ENCODE measurements at regions of chr18 and their contacts with region 1.

Region 1: DNA sequence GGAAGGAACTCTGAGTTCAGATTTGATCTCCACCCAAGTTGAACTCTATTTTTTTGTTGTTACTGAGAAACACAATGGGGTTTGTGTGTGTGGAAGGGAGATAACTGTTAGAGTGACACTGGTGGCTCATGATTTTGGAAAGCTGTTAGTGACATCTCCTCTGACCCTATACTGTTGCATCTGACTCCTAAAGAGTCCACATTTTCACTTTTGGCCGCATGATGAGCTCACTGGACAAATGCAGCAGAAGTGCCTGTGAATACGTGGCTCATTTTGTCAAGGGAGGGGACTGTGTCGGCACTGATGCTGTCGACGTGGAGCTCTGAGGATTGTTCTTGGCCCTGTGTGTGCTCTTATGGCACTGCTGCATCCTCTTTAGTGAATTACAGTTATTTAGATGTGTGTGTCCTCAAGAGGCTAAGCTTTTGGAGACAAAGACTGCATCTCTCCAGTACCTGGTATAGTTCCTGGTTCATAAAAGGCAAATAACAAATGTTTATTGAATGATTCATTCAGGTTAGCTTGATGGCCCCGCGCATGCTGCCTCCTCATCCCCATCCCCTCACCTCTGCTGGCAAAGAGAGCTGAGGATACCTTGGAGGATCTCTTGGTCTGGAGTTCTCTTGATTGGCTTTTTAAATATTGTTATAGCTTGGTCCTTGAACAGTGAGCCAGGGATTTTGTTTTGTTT is 135.4 kb downstream of the PHLPP1 start:
- DNase-seq: no peak
- H3K4me3 ChIP-seq: peak overlapping the region in 17 of 59 donors; percentile 1 to 40 (median 15)
- H3K27ac ChIP-seq: peak overlapping the region in 58 of 59 donors; percentile 5 to 93 (median 79)
- H3K27me3 ChIP-seq: no peaks in the 10 kb centered on the region
- CTCF ChIP-seq: no peak

Region 2: DNA sequence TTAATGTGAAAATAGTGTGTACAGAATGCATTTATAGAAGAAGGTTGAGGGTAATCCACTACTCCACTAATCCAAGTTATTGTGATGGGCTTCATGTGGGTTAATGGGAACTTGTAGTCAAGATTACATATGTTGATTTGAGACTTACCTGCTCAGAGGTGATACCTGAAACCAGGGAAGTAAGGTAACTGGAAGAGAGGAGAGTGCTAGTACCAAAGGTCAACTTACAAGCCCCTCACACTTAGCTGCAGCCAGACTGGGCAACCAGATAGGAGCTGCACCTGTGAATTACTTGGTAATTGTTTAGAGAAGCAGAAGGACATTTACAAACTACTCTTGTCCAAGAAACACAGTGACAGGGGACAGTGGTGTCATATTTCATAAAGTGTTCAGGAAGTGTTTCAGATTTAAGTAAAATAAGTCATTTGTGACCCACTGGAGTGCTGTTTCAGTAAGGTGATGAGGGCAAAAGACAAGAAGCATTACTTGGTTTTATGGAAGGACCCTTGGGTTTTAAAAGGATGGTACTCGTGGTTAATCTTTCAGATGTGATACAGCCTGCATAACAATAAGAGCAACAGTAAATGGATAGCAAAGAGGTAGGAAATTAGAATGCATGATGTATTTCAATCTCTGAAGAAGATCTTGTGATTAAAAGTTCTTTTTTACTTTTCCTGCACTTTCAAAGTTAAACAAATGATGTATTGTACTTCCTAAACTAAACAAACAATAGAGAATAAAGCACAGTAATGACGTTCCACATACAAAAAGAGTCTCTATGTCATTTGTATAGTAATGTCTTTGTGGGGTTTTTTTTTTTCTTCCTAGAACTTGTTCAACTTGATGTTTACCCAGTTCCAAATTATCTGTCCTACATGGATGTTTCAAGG is 53.9 kb after region 1 on chr18:
- intact Hi-C with region 1: loop called in 1 of 2 experiments (anchors 10 kb)
- DNase-seq: no peak
- H3K4me3 ChIP-seq: peak overlapping the region in 6 of 59 donors; percentile 1 to 36 (median 10)
- H3K27ac ChIP-seq: peak overlapping the region; percentile 63 to 100 (median 94)
- H3K27me3 ChIP-seq: no peaks in the 10 kb centered on the region
- CTCF ChIP-seq: peak in 2 of 56 donors; percentile 19

Measured in dorsolateral prefrontal cortex (tissue), 120 donors.